CD14-positive monocyte (primary cell): ENCODE measurements at regions of chr6 and their contacts with region 1.

Region 1: DNA sequence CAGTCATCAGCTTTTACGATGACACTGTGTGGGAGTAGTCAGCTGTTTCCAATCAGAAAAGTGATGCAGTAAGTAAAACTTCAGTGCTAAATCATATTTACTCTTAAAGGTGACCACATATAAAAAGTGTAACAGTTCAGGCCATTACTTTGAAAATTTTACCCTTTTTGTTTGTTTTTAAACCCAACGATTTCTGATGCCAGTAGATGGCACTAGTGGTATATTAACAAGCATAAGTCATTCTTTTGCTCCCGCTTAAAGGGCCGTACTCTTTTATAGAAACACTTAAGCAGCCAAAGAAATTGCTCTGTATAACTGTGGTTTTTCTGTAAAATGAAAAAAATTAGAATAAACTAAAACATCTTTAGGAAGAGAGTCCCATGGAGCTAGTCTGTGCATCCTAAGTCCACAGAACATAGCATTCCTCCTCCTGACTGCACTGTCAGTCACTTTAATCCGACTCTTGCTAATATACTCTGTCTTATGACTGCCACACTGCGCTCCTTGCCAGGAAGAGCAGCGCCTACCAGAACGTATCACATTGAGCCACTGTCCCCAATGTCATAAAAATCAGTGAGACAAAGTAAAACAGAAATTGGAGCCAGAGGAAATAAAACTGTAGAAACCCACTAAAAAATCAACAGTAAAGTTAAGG is 25.0 kb downstream of the HEBP2 start:
- DNase-seq: peak in 2 of 3 donors; percentile 41 to 54
- H3K4me3 ChIP-seq: no peak overlapping the region
- H3K4me3 Mint-ChIP-seq: no peak overlapping the region
- H3K27ac ChIP-seq: no peak overlapping the region
- H3K27ac Mint-ChIP-seq: no peak overlapping the region
- H3K4me1 ChIP-seq: peaks cover 30 to 31% of the 10 kb centered on the region in 2 donors
- H3K4me1 Mint-ChIP-seq: peaks cover 39% of the 10 kb centered on the region
- H3K27me3 ChIP-seq: no peaks in the 10 kb centered on the region
- H3K27me3 Mint-ChIP-seq: peaks cover 1 to 3% (median 1%) of the 10 kb centered on the region in 3 donors
- CTCF ChIP-seq: peak; percentile 68

Region 2: DNA sequence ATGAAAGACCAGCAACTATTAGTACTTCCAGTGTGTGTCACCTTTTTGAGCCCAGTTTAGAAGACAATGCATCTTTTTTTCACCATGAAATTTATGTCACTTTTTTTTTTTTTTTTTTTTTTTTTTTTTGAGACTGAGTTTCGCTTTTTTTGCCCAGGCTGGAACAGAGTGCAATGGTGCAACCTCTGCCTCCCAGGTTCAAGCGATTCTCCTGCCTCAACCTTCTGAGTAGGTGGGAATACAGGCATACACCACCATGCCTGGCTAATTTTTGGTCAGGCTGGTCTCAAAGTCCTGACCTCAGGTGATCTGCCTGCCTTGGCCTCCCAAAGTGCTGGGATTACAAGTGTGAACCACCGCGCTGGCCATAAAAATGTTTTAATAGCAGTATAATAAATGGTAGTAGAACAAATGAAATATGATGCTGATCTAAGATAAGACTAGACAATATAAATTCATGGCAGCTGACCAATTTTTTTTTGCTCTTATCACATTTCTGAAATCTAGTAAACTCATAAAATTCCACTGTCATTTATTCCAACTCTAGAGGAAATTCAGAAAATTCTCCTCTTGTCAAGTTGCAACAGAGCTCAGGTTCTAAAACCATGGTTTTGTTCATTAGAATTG is 49.0 kb after region 1 on chr6:
- intact Hi-C with region 1: no loop called
- DNase-seq: no peak
- H3K4me3 ChIP-seq: no peak overlapping the region
- H3K4me3 Mint-ChIP-seq: no peak overlapping the region
- H3K27ac ChIP-seq: no peak overlapping the region
- H3K27ac Mint-ChIP-seq: no peak overlapping the region
- H3K4me1 ChIP-seq: no peaks in the 10 kb centered on the region
- H3K4me1 Mint-ChIP-seq: no peaks in the 10 kb centered on the region
- H3K27me3 ChIP-seq: no peaks in the 10 kb centered on the region
- H3K27me3 Mint-ChIP-seq: peaks cover 0 to 1% (median 0%) of the 10 kb centered on the region in 3 donors
- CTCF ChIP-seq: no peak

Region 3: DNA sequence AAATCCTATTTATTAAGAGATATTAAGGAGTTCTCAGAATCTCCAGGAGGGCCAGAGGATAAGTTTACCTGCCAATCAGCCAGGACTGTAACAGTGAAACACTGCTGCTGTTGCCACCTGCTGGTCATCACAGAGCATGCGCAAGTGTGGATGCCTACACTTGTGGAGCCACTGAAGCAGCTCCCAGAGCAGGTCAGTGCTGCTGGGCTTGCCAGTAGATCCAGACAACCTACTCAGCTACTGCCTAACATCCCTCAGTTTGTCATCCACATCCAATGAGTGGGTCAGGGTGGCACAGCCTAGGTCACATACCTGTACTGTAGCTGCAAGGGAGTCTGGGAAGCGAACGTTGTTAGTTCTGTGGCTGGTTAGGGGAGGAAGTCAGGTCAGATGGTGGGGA is 88.6 kb after region 1 on chr6:
- intact Hi-C with region 1: loop called (anchors 5 kb)
- DNase-seq: peak; percentile 38 to 66 (median 61)
- H3K4me3 ChIP-seq: no peak overlapping the region
- H3K4me3 Mint-ChIP-seq: no peak overlapping the region
- H3K27ac ChIP-seq: no peak overlapping the region
- H3K27ac Mint-ChIP-seq: peak overlapping the region in 2 of 7 donors; percentile 19 to 78
- H3K4me1 ChIP-seq: peaks cover 17 to 20% of the 10 kb centered on the region in 2 donors
- H3K4me1 Mint-ChIP-seq: peaks cover 17% of the 10 kb centered on the region
- H3K27me3 ChIP-seq: no peaks in the 10 kb centered on the region
- H3K27me3 Mint-ChIP-seq: peaks cover 0 to 9% (median 0%) of the 10 kb centered on the region in 3 donors
- CTCF ChIP-seq: peak; percentile 90

Region 4: GRCh38 chr6:138765896-138766655 is 337.0 kb after region 1 on chr6:
- intact Hi-C with region 1: loop called in 1 of 2 experiments (anchors 10 kb)
- DNase-seq: peak; percentile 25 to 48 (median 27)
- H3K4me3 ChIP-seq: no peak overlapping the region
- H3K4me3 Mint-ChIP-seq: no peak overlapping the region
- H3K27ac ChIP-seq: no peak overlapping the region
- H3K27ac Mint-ChIP-seq: peak overlapping the region in 1 of 7 donors; percentile 6
- H3K4me1 ChIP-seq: peaks cover 6 to 9% of the 10 kb centered on the region in 2 donors
- H3K4me1 Mint-ChIP-seq: peaks cover 5% of the 10 kb centered on the region
- H3K27me3 ChIP-seq: no peaks in the 10 kb centered on the region
- H3K27me3 Mint-ChIP-seq: peaks cover 0 to 2% (median 1%) of the 10 kb centered on the region in 3 donors
- CTCF ChIP-seq: peak; percentile 73